ENCODE measurements at regions of chr4 and their contacts with region 1.

Region 1: DNA sequence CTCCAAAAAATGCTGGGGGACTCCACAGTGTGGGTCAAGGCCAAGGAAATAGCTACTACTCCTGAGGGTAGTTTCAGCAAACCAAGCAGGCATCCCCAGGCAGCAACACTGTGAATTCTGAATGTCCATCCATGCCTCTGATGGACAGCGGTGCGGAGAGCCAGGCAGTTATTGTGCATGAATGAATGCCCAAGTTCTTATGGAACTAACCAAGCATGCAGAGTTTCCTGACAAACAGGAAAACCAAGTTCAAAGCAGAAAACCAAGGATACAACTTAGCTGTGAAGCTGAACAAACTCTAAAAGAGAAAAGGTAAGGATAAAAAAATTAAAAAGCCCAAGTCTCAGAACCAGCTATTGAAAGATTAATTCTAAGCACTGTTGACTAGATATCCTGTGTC is 642.6 kb upstream of the HS3ST1 start:
- DNase-seq: no peak
- H3K4me3 ChIP-seq: no peak overlapping the region
- CTCF ChIP-seq: no peak

Region 2: GRCh38 chr4:10530137-10530786 is 1541.1 kb before region 1 on chr4:
- in situ Hi-C with region 1: no loop called
- DNase-seq: peak; percentile 27
- H3K4me3 ChIP-seq: no peak overlapping the region
- CTCF ChIP-seq: no peak

Region 3: GRCh38 chr4:12137575-12137974 is 66.3 kb after region 1 on chr4:
- in situ Hi-C with region 1: loop called (anchors 10 kb)
- DNase-seq: no peak
- H3K4me3 ChIP-seq: no peak overlapping the region
- CTCF ChIP-seq: no peak